GM12878 (cell line): ENCODE measurements at regions of chr22 and their contacts with region 1.

Region 1: DNA sequence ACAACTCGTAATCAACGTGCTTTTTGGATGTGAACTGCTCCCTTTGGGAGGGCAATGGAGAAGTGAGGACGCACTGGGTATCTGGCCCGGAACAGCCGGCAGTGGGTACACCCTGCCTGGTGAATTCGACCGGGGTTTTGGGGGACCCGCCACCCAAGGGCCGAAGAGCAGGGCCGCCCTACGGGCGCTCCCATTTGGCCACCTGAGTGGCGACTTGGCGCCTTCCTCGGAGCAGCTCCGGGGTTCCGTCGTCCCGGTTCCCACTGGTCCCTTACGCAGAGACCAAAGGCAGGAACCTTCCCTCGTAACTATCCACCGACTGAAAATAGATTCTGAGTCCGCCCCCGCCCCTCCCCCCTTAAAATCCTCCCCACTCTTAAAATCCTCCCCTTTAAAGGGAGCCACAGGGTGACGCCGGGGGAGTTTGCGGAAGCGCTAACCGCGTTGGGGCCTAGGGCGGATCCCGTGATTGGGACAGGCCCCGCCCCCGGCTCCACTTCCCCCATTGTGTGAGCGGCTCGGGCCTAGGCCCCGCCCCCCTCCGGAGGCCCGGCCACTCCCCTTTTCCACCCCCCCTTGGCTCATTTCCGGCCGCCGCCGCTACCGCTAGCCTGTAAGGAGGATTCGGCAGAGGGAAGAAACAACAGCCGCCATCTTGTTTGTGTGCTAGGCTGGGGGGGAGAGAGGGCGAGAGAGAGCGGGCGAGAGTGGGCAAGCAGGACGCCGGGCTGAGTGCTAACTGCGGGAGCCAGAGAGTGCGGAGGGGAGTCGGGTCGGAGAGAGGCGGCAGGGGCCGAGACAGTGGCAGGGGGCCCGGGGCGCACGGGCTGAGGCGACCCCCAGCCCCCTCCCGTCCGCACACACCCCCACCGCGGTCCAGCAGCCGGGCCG is 1.0 kb upstream of the EP300 start:
- DNase-seq: peak; percentile 92
- ATAC-seq: peak; percentile 88
- H3K4me3 ChIP-seq: peak overlapping the region; percentile 95
- H3K27ac ChIP-seq: peak overlapping the region; percentile 98
- H3K4me1 ChIP-seq: no peaks in the 10 kb centered on the region; the same call in 1 of the 2 replicates
- H3K27me3 ChIP-seq: no peaks in the 10 kb centered on the region
- CTCF ChIP-seq: no peak
- EP300 ChIP-seq: no peak; a peak in 1 of 4 replicates
- POLR2A ChIP-seq: peak; percentile 90
- RAD21 ChIP-seq: no peak

Region 2: GRCh38 chr22:41022470-41023298 is 68.7 kb before region 1 on chr22:
- CTCF ChIA-PET with region 1: no interaction called
- POLR2A ChIA-PET with region 1: interaction called, 4 read pairs
- RAD21 ChIA-PET with region 1: interaction called, 10 read pairs
- SMC1A ChIA-PET with region 1: interaction called, 11 read pairs
- in situ Hi-C with region 1: no loop called
- intact Hi-C with region 1: loop called (anchors 2 kb)
- DNase-seq: peak; percentile 24
- ATAC-seq: peak; percentile 86
- H3K4me3 ChIP-seq: peak overlapping the region; percentile 75
- H3K27ac ChIP-seq: 0 out of 2 replicates have a peak overlapping the region, but pooled peaks have one; percentile 29
- H3K4me1 ChIP-seq: peaks cover 7% of the 10 kb centered on the region
- H3K27me3 ChIP-seq: no peaks in the 10 kb centered on the region; a peak in 1 of 4 replicates
- CTCF ChIP-seq: no peak
- EP300 ChIP-seq: 0 out of 4 replicates have a peak, but pooled peaks of 1 of the 2 experiments have one; percentile 16
- POLR2A ChIP-seq: peak; percentile 69; the same call in 1 of the 2 replicates
- RAD21 ChIP-seq: no peak

Region 3: DNA sequence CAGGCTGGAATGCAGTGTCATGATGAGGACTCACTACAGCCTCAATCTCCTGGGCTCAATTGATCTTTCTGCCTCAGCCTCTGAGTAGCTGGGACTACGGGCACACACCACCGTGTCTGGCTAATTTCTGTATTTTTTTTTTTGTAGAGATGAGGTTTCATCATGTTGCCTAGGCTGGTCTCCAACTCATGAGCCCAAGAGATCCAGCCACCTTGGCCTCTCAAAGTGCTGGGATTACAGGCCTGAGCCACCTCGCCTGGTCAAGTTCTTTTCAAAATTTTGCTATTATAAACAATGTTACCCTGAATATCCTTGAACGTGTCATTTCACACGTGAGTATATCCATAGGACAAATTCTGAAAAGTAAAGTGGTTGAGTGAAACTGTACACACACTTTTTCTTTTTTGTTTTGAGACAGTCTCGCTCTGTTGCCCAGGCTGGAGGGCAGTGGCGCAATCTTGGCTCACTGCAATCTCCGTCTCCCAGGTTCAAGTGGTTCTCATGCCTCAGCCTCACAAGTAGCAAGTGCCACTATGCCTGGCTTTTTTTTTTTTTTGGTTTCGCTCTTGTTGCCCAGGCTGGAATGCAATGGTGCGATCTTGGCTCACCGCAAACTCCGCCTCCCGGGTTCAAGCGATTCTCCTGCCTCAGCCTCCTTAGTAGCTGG is 20.6 kb before region 1 on chr22:
- CTCF ChIA-PET with region 1: no interaction called
- POLR2A ChIA-PET with region 1: interaction called, 13 read pairs
- RAD21 ChIA-PET with region 1: interaction called, 11 read pairs
- SMC1A ChIA-PET with region 1: interaction called, 5 read pairs
- in situ Hi-C with region 1: no loop called
- intact Hi-C with region 1: loop called (anchors 1 kb)
- DNase-seq: no peak
- ATAC-seq: no peak
- H3K4me3 ChIP-seq: no peak overlapping the region
- H3K27ac ChIP-seq: no peak overlapping the region
- H3K4me1 ChIP-seq: peaks cover 16% of the 10 kb centered on the region
- H3K27me3 ChIP-seq: no peaks in the 10 kb centered on the region
- CTCF ChIP-seq: no peak
- EP300 ChIP-seq: no peak
- POLR2A ChIP-seq: no peak
- RAD21 ChIP-seq: no peak

Region 4: DNA sequence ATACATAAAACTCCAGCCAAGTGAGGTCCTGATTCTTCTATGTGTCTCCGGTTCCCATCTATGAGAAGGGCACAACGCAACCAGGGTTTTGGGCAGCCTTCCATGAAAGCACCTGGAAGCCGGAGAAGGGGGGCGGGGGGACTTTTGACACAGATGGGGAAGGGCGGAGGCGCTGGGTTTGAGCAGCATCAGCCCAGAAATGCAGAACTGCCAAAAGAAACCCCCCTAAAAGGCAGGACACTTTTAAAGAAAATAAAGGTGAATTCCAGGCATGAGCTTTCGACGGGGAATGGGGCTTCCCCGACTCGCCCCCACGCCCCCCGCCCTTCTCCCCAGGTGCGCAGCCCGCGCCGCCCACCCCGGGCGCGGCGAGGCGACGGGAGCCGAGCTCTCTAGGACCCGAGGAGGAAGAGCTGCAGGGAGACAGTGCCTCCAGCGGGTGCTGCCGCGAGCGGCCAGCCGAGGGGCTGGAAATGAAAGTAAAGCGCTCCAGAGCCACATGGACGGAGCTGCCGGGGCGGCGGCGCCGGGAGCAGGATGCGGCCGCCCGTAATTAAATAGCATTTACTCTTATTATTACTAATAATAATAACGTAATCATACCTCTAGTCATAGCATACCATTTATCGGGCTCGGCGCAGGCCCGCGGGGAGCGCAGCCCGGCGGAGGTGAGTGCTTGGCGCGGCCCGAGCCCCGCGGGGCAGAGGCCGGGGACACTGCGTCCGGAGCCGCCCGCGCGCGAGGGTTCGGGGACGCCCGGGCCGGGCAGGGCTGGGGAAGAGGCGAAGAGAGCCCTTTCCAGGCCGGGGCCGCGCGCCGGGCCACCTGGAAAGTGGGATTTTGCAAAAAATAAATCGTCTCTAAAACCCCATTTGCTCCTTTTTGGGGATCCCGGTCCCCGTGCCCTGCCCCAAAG is 210.0 kb after region 1 on chr22 and contains the start of gene ZC3H7B:
- CTCF ChIA-PET with region 1: no interaction called
- POLR2A ChIA-PET with region 1: no interaction called
- RAD21 ChIA-PET with region 1: no interaction called
- SMC1A ChIA-PET with region 1: no interaction called
- in situ Hi-C with region 1: no loop called
- intact Hi-C with region 1: loop called (anchors 5 kb)
- DNase-seq: peak; percentile 28
- ATAC-seq: peak; percentile 98
- H3K4me3 ChIP-seq: peak within 1 kb of the TSS; percentile 93
- H3K27ac ChIP-seq: peak within 1 kb of the TSS; percentile 91
- H3K4me1 ChIP-seq: peaks cover 4% of the 10 kb centered on the region
- H3K27me3 ChIP-seq: no peaks in the 10 kb centered on the region
- CTCF ChIP-seq: peak; percentile 57 to 66 (median 58)
- EP300 ChIP-seq: no peak
- POLR2A ChIP-seq: peak; percentile 84
- RAD21 ChIP-seq: peak; percentile 45
- polyA plus RNA-seq, gene ZC3H7B: 0.26 to 0.34 TPM